B cell (primary cell): ENCODE measurements at regions of chr12 and their contacts with region 1.

Region 1: GRCh38 chr12:94297876-94298505 is 149.6 kb downstream of the PLXNC1 start:
- DNase-seq: no peak
- ATAC-seq: no peak
- H3K4me3 ChIP-seq: peak overlapping the region in 1 of 5 experiments; percentile 38
- H3K4me3 Mint-ChIP-seq: peak overlapping the region; percentile 44
- H3K27ac ChIP-seq: peak overlapping the region; percentile 81 to 89
- H3K27ac Mint-ChIP-seq: peak overlapping the region; percentile 85
- H3K4me1 ChIP-seq: peaks cover 37 to 43% of the 10 kb centered on the region in 2 donors
- H3K4me1 Mint-ChIP-seq: peaks cover 59% of the 10 kb centered on the region
- H3K27me3 ChIP-seq: no peaks in the 10 kb centered on the region
- H3K27me3 Mint-ChIP-seq: no peaks in the 10 kb centered on the region
- CTCF ChIP-seq: no peak

Region 2: GRCh38 chr12:94047741-94048567 is 250.0 kb before region 1 on chr12:
- CTCF ChIA-PET with region 1: no interaction called
- POLR2A ChIA-PET with region 1: no interaction called
- intact Hi-C with region 1: no loop called
- DNase-seq: no peak
- ATAC-seq: no peak
- H3K4me3 ChIP-seq: no peak overlapping the region
- H3K4me3 Mint-ChIP-seq: no peak overlapping the region
- H3K27ac ChIP-seq: no peak overlapping the region
- H3K27ac Mint-ChIP-seq: no peak overlapping the region
- H3K4me1 ChIP-seq: no peaks in the 10 kb centered on the region
- H3K4me1 Mint-ChIP-seq: no peaks in the 10 kb centered on the region
- H3K27me3 ChIP-seq: no peaks in the 10 kb centered on the region
- H3K27me3 Mint-ChIP-seq: peaks cover 15% of the 10 kb centered on the region
- CTCF ChIP-seq: no peak

Region 3: DNA sequence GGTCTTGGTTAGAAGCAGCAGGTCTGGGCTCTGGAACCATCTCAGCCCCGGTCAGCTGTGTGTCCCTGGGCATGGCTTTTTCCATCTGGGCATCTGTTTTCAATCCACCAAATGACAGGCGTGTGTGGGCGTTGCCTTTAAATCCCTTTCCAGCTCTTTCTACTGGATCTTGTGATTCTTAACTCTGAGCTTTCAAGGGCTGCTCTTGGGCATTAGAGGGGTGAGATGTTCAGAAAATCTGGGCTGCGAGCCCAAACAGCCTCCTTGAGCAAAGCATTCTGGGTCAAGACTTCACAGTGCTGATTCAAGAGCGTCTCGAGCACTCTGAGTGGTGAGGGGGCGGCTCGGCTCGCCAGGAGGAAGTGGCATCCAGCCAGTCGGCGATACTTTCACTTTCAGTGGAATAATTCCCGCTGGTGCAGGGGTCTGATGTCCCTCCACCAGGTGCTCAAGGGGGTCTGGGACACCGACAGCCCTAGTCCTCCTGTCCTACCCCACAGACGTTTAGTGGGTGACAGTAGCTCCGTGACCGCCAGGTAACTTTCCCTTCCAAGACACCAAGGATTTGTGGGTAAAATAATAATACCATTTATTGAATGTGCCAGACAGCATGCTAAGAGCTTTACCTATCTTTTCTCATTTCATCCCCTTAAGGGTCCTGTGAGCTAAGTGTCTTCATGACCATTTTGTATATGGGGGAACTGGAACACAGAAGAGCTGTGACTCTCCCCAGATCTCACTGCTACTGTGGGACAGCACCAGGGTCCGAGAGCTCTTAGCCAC is 35.6 kb before region 1 on chr12:
- CTCF ChIA-PET with region 1: no interaction called
- POLR2A ChIA-PET with region 1: no interaction called
- intact Hi-C with region 1: loop called (anchors 2 kb)
- DNase-seq: peak; percentile 86
- ATAC-seq: peak; percentile 82
- H3K4me3 ChIP-seq: peak overlapping the region; percentile 48 to 77 (median 64)
- H3K4me3 Mint-ChIP-seq: peak overlapping the region; percentile 99
- H3K27ac ChIP-seq: peak overlapping the region; percentile 81 to 90
- H3K27ac Mint-ChIP-seq: peak overlapping the region; percentile 99
- H3K4me1 ChIP-seq: peaks cover 45% of the 10 kb centered on the region in 2 donors
- H3K4me1 Mint-ChIP-seq: peaks cover 58% of the 10 kb centered on the region
- H3K27me3 ChIP-seq: no peaks in the 10 kb centered on the region
- H3K27me3 Mint-ChIP-seq: no peaks in the 10 kb centered on the region
- CTCF ChIP-seq: no peak

Region 4: DNA sequence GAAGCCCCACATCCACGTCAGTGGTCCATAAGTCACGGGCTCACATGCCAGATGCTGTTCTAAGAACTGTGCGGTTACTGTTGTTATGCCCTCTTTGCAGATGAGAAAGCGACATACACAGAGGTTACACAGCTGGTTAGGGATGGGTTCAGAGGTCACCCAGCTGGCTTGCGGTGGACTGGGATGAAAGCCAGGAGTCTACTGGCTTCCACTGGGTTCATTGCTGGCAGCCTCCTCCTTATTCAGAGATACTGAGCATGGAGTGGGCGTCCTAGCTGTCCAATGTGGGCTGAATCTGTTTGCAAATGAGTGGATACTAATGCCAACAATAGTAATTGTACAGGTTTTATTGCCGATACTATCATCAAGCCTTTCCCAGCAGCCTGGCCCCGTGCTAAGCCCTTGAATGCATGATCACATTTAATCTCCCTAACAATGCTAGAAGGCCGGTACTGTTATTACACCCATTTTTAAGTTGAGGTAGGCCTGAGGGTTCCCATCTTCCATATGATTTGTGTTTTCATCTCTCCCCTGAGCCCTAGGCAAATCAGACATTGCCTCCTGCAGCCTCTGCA is 20.5 kb before region 1 on chr12:
- CTCF ChIA-PET with region 1: no interaction called
- POLR2A ChIA-PET with region 1: interaction called, 10 read pairs
- intact Hi-C with region 1: no loop called
- DNase-seq: no peak
- ATAC-seq: no peak
- H3K4me3 ChIP-seq: no peak overlapping the region
- H3K4me3 Mint-ChIP-seq: no peak overlapping the region
- H3K27ac ChIP-seq: no peak overlapping the region
- H3K27ac Mint-ChIP-seq: no peak overlapping the region
- H3K4me1 ChIP-seq: peaks cover 3 to 5% of the 10 kb centered on the region in 2 donors
- H3K4me1 Mint-ChIP-seq: peaks cover 17% of the 10 kb centered on the region
- H3K27me3 ChIP-seq: no peaks in the 10 kb centered on the region
- H3K27me3 Mint-ChIP-seq: no peaks in the 10 kb centered on the region
- CTCF ChIP-seq: no peak

Region 5: DNA sequence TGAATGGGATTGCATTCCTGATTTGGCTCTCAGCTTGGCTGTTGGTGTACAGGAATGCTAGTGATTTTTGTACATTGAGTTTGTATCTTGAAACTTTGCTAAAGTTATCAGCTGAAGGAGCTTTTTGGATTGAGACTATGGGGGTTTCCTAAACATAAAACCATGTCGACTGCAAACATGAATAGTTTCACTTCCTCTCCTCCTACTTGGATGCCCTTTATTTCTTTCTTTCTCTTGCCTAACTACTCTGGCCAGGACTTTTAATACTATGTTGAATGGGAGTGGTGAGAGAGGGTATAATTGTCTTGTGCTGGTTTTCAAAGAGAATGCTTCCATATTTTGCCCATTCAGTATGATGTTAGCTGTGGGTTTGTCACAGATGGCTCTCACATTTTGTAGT is 20.2 kb after region 1 on chr12:
- CTCF ChIA-PET with region 1: no interaction called
- POLR2A ChIA-PET with region 1: no interaction called
- intact Hi-C with region 1: loop called (anchors 1 kb)
- DNase-seq: peak; percentile 74
- ATAC-seq: peak; percentile 97
- H3K4me3 ChIP-seq: no peak overlapping the region
- H3K4me3 Mint-ChIP-seq: peak overlapping the region; percentile 12
- H3K27ac ChIP-seq: peak overlapping the region in 1 of 2 donors; percentile 33
- H3K27ac Mint-ChIP-seq: peak overlapping the region; percentile 60
- H3K4me1 ChIP-seq: peaks cover 16 to 18% of the 10 kb centered on the region in 2 donors
- H3K4me1 Mint-ChIP-seq: peaks cover 28% of the 10 kb centered on the region
- H3K27me3 ChIP-seq: no peaks in the 10 kb centered on the region
- H3K27me3 Mint-ChIP-seq: no peaks in the 10 kb centered on the region
- CTCF ChIP-seq: no peak